HepG2 (cell line): ENCODE measurements at regions of chr7 and their contacts with region 1.

Region 1: GRCh38 chr7:77455324-77455723 is 39.2 kb upstream of the GSAP start:
- DNase-seq: peak; percentile 60
- ATAC-seq: peak; percentile 55
- H3K4me3 ChIP-seq: no peak overlapping the region
- H3K27ac ChIP-seq: no peak overlapping the region
- H3K4me1 ChIP-seq: peaks cover 71% of the 10 kb centered on the region
- H3K27me3 ChIP-seq: no peaks in the 10 kb centered on the region
- CTCF ChIP-seq: no peak
- EP300 ChIP-seq: no peak
- POLR2A ChIP-seq: no peak
- RAD21 ChIP-seq: no peak

Region 2: DNA sequence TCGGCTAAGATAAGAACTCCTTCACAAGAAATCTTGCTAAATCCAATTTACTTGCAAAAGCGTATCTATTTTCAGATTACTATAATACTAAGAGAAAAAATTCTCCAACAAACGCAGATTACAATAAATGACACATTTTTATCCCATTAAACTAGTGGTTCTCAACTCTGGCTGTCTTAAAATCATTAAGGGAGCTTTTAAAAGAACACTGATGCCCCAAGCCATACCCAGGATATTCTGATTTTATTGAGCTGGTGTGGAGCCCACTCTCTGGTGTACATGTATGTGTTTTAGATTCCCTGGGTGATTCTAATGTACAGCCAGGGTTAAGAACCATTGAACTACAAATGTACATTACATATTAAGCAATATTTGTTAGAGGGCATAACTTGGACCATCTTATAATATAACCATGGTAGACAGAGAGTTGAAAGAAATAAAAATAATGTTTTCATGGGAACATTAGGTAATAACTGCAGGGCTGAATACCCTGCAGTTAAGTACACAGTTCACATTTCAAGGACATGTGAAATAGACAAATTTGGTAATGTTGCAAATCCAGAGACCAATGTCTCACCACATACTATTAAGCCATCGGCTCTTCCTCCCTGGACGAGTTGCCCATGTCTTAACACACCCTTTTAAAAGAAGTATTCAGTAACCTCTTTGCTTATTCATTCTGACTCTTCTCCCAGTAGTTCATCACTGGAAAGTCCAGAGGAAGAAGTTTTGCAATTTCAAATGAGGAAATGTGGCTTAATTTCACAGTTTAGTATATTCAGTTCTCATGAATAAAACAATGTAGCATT is 45.4 kb before region 1 on chr7:
- CTCF ChIA-PET with region 1: no interaction called
- POLR2A ChIA-PET with region 1: interaction called, 5 read pairs
- in situ Hi-C with region 1: no loop called
- intact Hi-C with region 1: loop called (anchors 2 kb)
- DNase-seq: peak; percentile 95
- ATAC-seq: peak; percentile 83
- H3K4me3 ChIP-seq: peak overlapping the region; percentile 15 to 49 (median 16); a peak in 4 of 6 replicates
- H3K27ac ChIP-seq: peak overlapping the region; percentile 96
- H3K4me1 ChIP-seq: peaks cover 88% of the 10 kb centered on the region
- H3K27me3 ChIP-seq: no peaks in the 10 kb centered on the region
- CTCF ChIP-seq: no peak
- EP300 ChIP-seq: peak; percentile 69 to 97; a peak in 3 of 4 replicates
- POLR2A ChIP-seq: peak in 1 of 2 experiments; percentile 62; a peak in 1 of 4 replicates
- RAD21 ChIP-seq: no peak

Region 3: DNA sequence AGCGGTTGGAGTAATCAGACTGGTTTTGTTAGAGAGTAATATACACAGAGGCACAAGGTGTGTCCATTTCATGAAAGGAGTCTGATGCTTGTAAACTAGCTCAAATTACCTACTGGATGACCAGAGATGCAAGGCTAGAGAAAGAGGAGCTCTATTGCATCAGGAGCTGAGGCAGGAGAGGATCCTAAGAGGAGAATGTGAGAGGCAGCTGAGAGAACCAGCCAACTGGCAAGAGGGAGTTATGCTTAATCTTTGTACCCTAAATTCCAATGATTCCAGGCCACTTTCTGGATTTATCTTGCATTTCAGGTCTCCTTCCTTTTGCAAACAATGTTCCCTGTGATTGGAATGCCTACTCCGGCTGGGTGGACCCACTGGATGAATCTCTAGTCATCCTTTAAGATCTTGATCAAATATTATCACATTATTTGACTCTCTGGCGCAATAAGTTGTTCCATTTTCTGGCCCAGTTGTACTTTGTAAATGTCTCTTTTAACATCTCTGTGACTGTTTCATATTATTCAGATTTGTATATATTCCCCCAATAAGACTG is 24.3 kb after region 1 on chr7:
- CTCF ChIA-PET with region 1: no interaction called
- POLR2A ChIA-PET with region 1: no interaction called
- in situ Hi-C with region 1: no loop called
- intact Hi-C with region 1: loop called (anchors 1 kb)
- DNase-seq: peak; percentile 94
- ATAC-seq: peak; percentile 96
- H3K4me3 ChIP-seq: peak overlapping the region in 2 of 3 experiments; percentile 9 to 24; a peak in 3 of 6 replicates
- H3K27ac ChIP-seq: peak overlapping the region; percentile 64
- H3K4me1 ChIP-seq: peaks cover 66% of the 10 kb centered on the region
- H3K27me3 ChIP-seq: no peaks in the 10 kb centered on the region
- CTCF ChIP-seq: no peak
- EP300 ChIP-seq: peak in 1 of 2 experiments; percentile 62; a peak in 2 of 4 replicates
- POLR2A ChIP-seq: 0 out of 4 replicates have a peak, but pooled peaks of 1 of the 2 experiments have one; percentile 34
- RAD21 ChIP-seq: no peak

Region 4: DNA sequence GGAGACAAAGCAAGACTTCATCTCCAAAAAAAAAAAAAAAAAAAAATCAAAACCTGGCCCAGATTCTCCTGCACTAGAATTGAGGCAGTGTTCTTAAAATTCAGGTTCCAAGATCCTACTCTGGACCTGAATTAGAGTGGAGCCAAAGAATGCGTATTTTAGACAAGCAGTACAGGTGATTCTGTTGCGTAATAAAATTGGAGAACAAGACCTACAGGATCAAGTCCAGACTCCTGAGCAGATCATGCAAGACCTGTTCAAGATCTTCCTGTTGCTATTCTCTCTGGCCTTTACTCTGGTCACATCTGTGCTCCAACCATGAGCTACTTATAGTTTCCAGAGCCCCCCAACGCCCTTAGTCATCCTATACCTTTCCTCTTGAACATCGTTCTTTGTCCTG is 189.4 kb after region 1 on chr7:
- CTCF ChIA-PET with region 1: no interaction called
- POLR2A ChIA-PET with region 1: no interaction called
- in situ Hi-C with region 1: no loop called
- intact Hi-C with region 1: no loop called
- DNase-seq: no peak
- ATAC-seq: no peak
- H3K4me3 ChIP-seq: no peak overlapping the region
- H3K27ac ChIP-seq: no peak overlapping the region
- H3K4me1 ChIP-seq: peaks cover 7% of the 10 kb centered on the region
- H3K27me3 ChIP-seq: no peaks in the 10 kb centered on the region
- CTCF ChIP-seq: no peak
- EP300 ChIP-seq: no peak
- POLR2A ChIP-seq: no peak
- RAD21 ChIP-seq: no peak